ENCODE measurements at regions of chr4 and their contacts with region 1.

Region 1: DNA sequence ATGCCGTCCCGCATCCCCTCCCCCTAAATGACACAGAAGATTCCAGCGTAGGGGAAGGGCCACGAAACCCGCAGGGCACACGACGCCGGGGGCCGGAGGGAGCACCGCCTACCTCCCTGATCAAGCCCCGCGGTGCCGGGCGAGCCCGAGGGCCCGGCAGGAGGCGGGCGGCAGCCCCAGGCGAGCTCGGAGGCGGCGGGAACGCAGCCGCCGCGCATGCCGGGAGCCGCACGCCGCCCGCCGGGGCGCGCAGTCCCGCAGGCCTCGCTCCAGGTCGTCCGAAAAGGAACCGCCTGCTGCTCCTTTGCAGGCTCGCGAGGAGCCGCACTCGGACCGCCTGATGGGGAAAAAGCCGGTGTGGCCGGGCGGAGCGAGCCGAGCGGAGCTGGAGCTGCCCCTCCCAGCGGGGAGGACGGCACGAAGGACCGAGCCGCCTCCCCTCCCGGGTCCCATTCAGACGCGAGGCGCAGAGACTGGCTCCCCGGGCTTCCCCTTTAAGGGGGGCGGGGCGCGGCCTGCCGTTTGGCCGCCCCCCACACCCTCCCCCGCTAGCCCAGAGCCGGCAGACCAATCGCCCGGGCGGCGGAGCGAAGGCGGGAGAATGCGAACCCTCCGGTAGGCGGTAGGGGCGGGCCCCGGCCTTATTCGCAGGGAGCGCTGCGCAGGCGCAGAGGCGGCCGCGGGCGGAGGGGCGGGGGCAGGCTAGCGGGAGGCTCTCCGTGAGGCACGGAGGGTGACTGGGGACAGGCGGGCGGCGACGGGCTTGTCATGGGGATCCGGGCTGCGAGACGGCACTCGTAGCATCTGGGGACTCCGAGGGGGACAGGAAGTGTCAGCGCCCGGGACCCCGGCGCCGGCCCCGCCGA is 561 bp upstream of the ING2 start:
- DNase-seq: peak; percentile 100
- ATAC-seq: peak; percentile 81
- H3K4me3 Mint-ChIP-seq: peak overlapping the region; percentile 93
- H3K27ac Mint-ChIP-seq: peak overlapping the region; percentile 91
- H3K4me1 Mint-ChIP-seq: peaks cover 34% of the 10 kb centered on the region
- H3K27me3 Mint-ChIP-seq: no peaks in the 10 kb centered on the region

Region 2: GRCh38 chr4:183154701-183155391 is 349.5 kb before region 1 on chr4:
- POLR2A ChIA-PET with region 1: no interaction called
- DNase-seq: no peak
- ATAC-seq: no peak
- H3K4me3 Mint-ChIP-seq: no peak overlapping the region
- H3K27ac Mint-ChIP-seq: no peak overlapping the region
- H3K4me1 Mint-ChIP-seq: no peaks in the 10 kb centered on the region
- H3K27me3 Mint-ChIP-seq: no peaks in the 10 kb centered on the region

Region 3: GRCh38 chr4:183659029-183659871 is 155.0 kb after region 1 on chr4 and contains the starts of genes RWDD4 and TRAPPC11:
- POLR2A ChIA-PET with region 1: interaction called, 14 read pairs
- DNase-seq: peak; percentile 91
- ATAC-seq: peak; percentile 100
- H3K4me3 Mint-ChIP-seq: peak within 1 kb of the TSS; percentile 98
- H3K27ac Mint-ChIP-seq: peak within 1 kb of the TSS; percentile 94
- H3K4me1 Mint-ChIP-seq: peaks cover 32% of the 10 kb centered on the region
- H3K27me3 Mint-ChIP-seq: no peaks in the 10 kb centered on the region
- total RNA-seq, gene RWDD4: 13.9 to 14.1 TPM
- total RNA-seq, gene TRAPPC11: 33.0 to 34.6 TPM

Measured in activated naive CD8-positive, alpha-beta T cell treated with anti-CD3 and anti-CD28 coated beads, Interleukin-2, amount 10 ng/mL, durations not matched to agents 7 days and 5 days (primary cell).